ENCODE measurements at regions of chr3 and their contacts with region 1.

Region 1: GRCh38 chr3:102673271-102674115 is 238.7 kb downstream of the ZPLD1 start:
- DNase-seq: peak; percentile 4 to 62 (median 53)
- ATAC-seq: no peak
- H3K4me3 ChIP-seq: no peak overlapping the region
- H3K4me3 Mint-ChIP-seq: no peak overlapping the region
- H3K27ac ChIP-seq: no peak overlapping the region
- H3K27ac Mint-ChIP-seq: no peak overlapping the region
- H3K4me1 ChIP-seq: no peaks in the 10 kb centered on the region
- H3K4me1 Mint-ChIP-seq: peaks cover 4% of the 10 kb centered on the region
- H3K27me3 ChIP-seq: no peaks in the 10 kb centered on the region
- H3K27me3 Mint-ChIP-seq: peaks cover 7% of the 10 kb centered on the region
- CTCF ChIP-seq: peak; percentile 78

Region 2: DNA sequence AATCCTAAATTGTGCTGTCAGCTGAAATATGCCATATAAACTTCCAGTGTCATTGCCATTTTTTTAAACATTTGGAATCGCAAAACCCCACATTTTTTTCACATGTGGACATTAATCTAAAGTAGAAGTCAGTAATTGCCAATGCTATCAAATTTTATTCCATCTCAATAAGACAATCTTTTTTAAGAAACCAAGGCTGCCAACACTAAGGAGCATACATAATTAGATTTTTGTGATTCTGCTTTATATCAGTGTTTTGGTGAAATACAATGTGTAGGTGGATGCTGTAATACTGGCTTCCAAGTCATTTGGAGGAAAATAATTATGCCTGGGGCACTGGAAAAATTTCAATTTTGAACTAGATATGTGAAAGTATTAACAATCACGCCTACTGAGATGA is 18.0 kb after region 1 on chr3:
- CTCF ChIA-PET with region 1: interaction called, 18 read pairs
- POLR2A ChIA-PET with region 1: no interaction called
- intact Hi-C with region 1: no loop called
- DNase-seq: no peak
- ATAC-seq: no peak
- H3K4me3 ChIP-seq: no peak overlapping the region
- H3K4me3 Mint-ChIP-seq: no peak overlapping the region
- H3K27ac ChIP-seq: no peak overlapping the region
- H3K27ac Mint-ChIP-seq: no peak overlapping the region
- H3K4me1 ChIP-seq: no peaks in the 10 kb centered on the region
- H3K4me1 Mint-ChIP-seq: no peaks in the 10 kb centered on the region
- H3K27me3 ChIP-seq: no peaks in the 10 kb centered on the region
- H3K27me3 Mint-ChIP-seq: peaks cover 11% of the 10 kb centered on the region
- CTCF ChIP-seq: no peak

Measured in CD8-positive, alpha-beta T cell (primary cell).